ENCODE measurements at regions of chr18 and their contacts with region 1.

Region 1: GRCh38 chr18:11502368-11502767 is 107.0 kb upstream of the SLC35G4 start:
- DNase-seq: no peak
- ATAC-seq: no peak
- H3K4me3 Mint-ChIP-seq: no peak overlapping the region
- H3K27ac Mint-ChIP-seq: no peak overlapping the region
- H3K4me1 Mint-ChIP-seq: no peaks in the 10 kb centered on the region
- H3K27me3 Mint-ChIP-seq: peaks cover 6% of the 10 kb centered on the region

Region 2: GRCh38 chr18:11518788-11519685 is 16.7 kb after region 1 on chr18:
- CTCF ChIA-PET with region 1: interaction called, 13 read pairs
- POLR2A ChIA-PET with region 1: no interaction called
- DNase-seq: peak; percentile 73
- ATAC-seq: peak; percentile 72
- H3K4me3 Mint-ChIP-seq: no peak overlapping the region
- H3K27ac Mint-ChIP-seq: no peak overlapping the region
- H3K4me1 Mint-ChIP-seq: no peaks in the 10 kb centered on the region
- H3K27me3 Mint-ChIP-seq: peaks cover 7% of the 10 kb centered on the region